ENCODE measurements at regions of chr5 and their contacts with region 1.

Region 1: DNA sequence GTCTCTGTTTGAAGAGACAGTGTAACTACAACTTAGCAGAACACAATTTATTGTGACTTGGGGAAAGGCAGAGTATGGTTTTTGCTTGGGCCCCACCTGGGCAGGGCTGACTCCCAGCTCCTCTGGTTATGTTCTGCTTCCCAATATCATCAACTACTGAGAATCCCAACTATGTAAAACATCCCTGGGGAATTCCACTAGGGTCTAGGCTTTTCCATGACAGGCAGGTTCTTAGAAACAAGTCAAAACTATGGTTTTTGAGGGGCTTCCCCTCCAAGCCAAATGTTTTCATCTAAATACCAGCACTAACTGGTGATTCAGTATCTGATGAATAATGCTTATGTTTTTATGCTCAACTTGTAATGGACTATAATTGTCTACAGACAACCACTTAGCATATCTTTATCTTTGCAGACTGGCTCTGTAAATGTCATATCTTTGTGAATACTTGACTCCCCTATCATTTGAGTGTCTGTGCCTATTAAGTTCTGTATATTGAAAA is 409.5 kb downstream of the PDE4D start:
- DNase-seq: no peak
- H3K4me3 Mint-ChIP-seq: peak overlapping the region; percentile 1
- H3K27ac Mint-ChIP-seq: no peak overlapping the region
- H3K4me1 Mint-ChIP-seq: peaks cover 7% of the 10 kb centered on the region
- H3K27me3 Mint-ChIP-seq: peaks cover 6% of the 10 kb centered on the region

Region 2: GRCh38 chr5:59380350-59380951 is 103.6 kb before region 1 on chr5:
- intact Hi-C with region 1: loop called (anchors 5 kb)
- DNase-seq: peak; percentile 70
- H3K4me3 Mint-ChIP-seq: no peak overlapping the region
- H3K27ac Mint-ChIP-seq: no peak overlapping the region
- H3K4me1 Mint-ChIP-seq: peaks cover 5% of the 10 kb centered on the region
- H3K27me3 Mint-ChIP-seq: peaks cover 16% of the 10 kb centered on the region

Region 3: DNA sequence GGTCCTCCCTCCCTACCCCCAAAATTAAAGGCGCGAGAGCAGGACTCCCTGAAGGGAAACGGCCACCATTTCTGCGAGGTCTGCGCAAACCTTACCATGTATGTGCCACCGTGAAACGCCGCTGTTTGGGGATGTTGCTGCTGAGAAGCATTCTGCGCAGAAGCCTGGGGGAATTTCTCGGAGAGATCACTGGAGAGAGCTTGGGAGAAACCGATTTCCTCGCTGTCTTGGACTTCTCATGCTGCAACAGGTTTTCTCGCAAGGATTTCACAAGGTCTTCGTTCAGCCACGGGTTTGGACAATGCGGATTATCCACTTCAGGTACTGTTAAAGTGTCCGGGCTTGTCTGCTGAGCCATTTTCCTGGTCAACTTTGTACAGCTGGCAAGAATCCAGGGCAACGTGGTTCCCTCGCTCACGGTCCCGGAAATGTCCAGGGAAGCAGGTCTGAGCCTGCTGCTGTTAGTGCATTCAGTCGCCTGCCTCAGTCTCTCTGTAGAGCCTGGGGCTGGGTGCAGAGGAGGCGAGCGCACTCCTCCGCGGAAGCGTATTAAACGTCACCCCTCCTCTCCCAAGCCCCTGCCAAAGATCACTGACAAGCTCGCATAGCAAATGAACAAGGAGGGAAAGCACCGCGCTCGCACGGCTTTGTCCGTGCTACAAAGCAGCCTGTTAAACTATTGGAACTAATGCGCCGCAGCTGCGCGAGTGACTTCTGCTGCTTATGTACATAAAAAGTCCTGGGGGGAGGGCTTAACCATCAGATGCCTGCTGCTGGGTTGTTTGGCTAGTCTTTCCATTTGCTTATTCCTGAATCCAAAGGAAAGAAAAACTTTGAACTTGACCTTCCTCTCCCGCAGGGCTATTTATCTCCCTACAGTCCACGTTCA is 284.4 kb after region 1 on chr5:
- intact Hi-C with region 1: loop called (anchors 10 kb)
- DNase-seq: peak; percentile 73
- H3K4me3 Mint-ChIP-seq: peak overlapping the region; percentile 80
- H3K27ac Mint-ChIP-seq: peak overlapping the region; percentile 75
- H3K4me1 Mint-ChIP-seq: peaks cover 21% of the 10 kb centered on the region
- H3K27me3 Mint-ChIP-seq: peaks cover 42% of the 10 kb centered on the region

Measured in activated CD4-positive, alpha-beta T cell treated with anti-CD3 and anti-CD28 coated beads, Interleukin-2, amount 10 ng/mL, durations not matched to agents 24 days and 14 days (primary cell).